Activated CD4-positive, alpha-beta T cell treated with anti-CD3 and anti-CD28 coated beads for 36 hours (primary cell): ENCODE measurements at regions of chr6 and their contacts with region 1.

Region 1: GRCh38 chr6:34459899-34460593 is 5.8 kb upstream of the PACSIN1 start:
- DNase-seq: peak; percentile 73
- ATAC-seq: peak; percentile 84
- H3K4me3 Mint-ChIP-seq: no peak overlapping the region
- H3K27ac Mint-ChIP-seq: no peak overlapping the region
- H3K4me1 Mint-ChIP-seq: no peaks in the 10 kb centered on the region
- H3K27me3 Mint-ChIP-seq: peaks cover 3% of the 10 kb centered on the region

Region 2: DNA sequence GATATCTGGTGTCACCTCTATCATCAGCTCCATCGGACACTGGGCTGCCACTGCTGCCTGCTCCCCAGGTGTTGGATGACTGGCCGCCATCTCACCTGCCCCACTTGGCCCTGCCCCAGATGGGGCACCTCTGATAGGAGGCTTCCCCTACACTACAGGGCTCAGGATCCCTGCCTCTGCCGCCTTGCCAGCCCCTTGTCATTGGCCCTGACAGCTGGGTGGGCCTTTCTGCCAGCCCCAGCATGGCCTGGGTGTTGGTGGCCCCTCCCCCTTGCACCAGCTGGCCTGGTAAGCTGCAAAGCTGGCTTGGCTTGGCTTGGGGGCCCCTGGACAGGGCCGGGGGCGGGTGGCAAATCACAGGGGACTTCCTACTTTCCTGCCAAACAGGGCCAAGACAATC is 16.4 kb after region 1 on chr6:
- CTCF ChIA-PET with region 1: interaction called, 12 read pairs
- POLR2A ChIA-PET with region 1: no interaction called
- intact Hi-C with region 1: no loop called
- DNase-seq: no peak
- ATAC-seq: no peak
- H3K4me3 Mint-ChIP-seq: no peak overlapping the region
- H3K27ac Mint-ChIP-seq: no peak overlapping the region
- H3K4me1 Mint-ChIP-seq: no peaks in the 10 kb centered on the region
- H3K27me3 Mint-ChIP-seq: no peaks in the 10 kb centered on the region

Region 3: DNA sequence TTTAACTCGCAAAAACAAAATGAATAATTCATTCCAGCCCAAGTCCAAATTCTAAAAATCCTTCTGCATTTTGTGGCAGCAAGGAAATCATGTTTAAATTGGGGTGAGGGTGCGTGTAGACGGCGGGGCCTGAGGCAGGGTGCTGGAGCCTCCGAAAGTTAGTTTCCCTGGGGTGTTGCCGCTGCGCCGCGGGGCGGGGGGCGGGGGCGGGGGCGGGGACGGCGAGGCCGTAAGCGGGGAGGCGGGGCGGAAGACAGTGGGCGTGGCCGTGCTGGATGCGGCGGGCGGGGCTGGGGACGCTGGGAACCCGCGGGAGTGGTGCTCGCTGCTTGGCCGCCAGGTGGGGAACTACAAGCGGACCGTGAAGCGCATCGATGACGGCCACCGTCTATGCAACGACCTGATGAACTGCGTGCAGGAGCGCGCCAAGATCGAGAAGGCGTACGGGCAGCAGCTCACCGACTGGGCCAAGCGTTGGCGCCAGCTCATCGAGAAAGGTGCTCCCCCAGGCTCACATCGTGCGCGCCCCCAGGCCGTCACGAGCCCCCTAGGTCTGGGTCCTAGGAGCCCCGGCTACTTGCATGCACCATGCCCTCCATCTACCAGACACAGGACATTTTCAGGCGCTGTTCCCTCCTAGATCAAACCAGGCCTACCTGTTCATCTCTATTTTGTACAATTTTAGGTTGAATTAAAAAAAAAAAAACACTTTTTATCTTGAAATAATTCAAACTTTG is 67.1 kb after region 1 on chr6:
- CTCF ChIA-PET with region 1: interaction called, 5 read pairs
- POLR2A ChIA-PET with region 1: no interaction called
- intact Hi-C with region 1: loop called in 1 of 2 experiments (anchors 2 kb)
- DNase-seq: peak; percentile 98
- ATAC-seq: peak; percentile 100
- H3K4me3 Mint-ChIP-seq: no peak overlapping the region
- H3K27ac Mint-ChIP-seq: no peak overlapping the region
- H3K4me1 Mint-ChIP-seq: peaks cover 3% of the 10 kb centered on the region
- H3K27me3 Mint-ChIP-seq: no peaks in the 10 kb centered on the region

Region 4: GRCh38 chr6:34546551-34547321 is 86.7 kb after region 1 on chr6:
- CTCF ChIA-PET with region 1: no interaction called
- POLR2A ChIA-PET with region 1: no interaction called
- intact Hi-C with region 1: no loop called
- DNase-seq: no peak
- ATAC-seq: no peak
- H3K4me3 Mint-ChIP-seq: no peak overlapping the region
- H3K27ac Mint-ChIP-seq: no peak overlapping the region
- H3K4me1 Mint-ChIP-seq: no peaks in the 10 kb centered on the region
- H3K27me3 Mint-ChIP-seq: no peaks in the 10 kb centered on the region

Region 5: DNA sequence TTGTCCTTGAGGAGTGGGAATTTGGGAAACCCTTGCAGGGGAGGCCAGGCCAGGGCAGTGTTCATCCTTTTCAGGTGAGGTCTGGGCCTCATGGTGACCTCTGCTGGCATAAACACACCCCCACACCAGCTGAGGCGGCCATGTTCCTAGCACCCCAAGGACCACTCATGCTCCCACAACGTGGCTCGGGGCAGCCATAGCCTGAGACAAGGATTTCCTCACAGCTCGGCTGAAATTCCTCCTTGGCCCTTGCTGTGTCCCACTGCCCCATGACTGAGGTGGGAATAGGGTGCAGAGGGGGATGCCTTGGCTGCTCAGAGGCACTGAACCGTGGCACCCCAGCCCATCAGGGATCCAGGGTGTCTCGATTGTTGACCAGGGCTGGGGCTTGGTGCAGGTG is 123.4 kb after region 1 on chr6:
- CTCF ChIA-PET with region 1: interaction called, 3 read pairs
- POLR2A ChIA-PET with region 1: no interaction called
- intact Hi-C with region 1: loop called in 1 of 2 experiments (anchors 1 kb)
- DNase-seq: peak; percentile 47
- ATAC-seq: no peak
- H3K4me3 Mint-ChIP-seq: no peak overlapping the region
- H3K27ac Mint-ChIP-seq: no peak overlapping the region
- H3K4me1 Mint-ChIP-seq: no peaks in the 10 kb centered on the region
- H3K27me3 Mint-ChIP-seq: no peaks in the 10 kb centered on the region